Right ventricle myocardium inferior (tissue), 1 donor: ENCODE measurements at regions of chr5 and their contacts with region 1.

Region 1: GRCh38 chr5:14405267-14405666 is 176.3 kb upstream of the OTULINL start:
- DNase-seq: no peak
- ATAC-seq: no peak

Region 2: DNA sequence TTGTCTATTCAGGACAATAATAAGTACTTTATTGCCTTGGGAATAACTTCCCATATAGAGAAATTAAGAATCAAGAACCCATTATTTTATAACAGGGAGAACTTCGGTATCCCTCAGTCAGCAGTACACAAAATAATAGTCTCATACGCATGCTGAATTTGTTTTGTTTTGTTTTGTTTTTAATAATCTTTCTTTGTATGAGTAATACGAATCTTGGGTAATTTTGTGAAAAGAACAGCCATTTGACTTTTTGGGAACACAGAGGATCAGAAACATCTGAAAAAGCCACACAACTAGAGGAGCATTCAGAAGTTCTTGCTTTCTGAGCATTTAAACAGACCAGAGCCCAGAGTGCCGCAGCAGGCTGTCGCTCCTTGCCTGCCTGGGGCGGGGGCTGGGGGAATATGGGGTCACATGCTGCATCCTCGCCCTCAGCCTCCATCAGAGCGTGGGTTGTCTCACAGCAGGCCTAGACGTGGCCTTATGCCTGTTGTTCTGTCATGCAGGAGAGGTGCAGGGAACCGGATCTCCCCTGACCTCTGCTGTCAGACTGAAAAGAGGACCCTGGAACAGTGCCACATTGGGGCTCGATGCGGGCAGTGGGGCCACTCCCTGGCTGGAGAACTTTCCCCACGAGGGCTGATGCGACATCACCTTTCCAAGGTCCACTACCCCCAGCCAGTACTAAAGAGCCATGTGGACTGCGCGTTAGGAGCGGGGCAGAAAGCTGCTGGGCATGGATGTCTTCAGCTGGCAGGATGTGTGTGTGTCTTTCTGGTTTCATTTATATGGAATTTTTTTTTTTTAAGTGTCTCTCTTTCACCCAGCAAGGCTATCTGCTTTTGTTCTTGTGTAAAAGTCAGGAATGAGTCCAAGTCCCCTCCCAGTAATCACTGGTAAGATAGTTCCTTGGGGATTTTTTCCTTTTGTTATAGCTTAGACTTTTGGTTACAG is 43.0 kb after region 1 on chr5:
- intact Hi-C with region 1: loop called (anchors 5 kb)
- DNase-seq: no peak
- ATAC-seq: peak; percentile 10

Region 3: GRCh38 chr5:14483525-14484157 is 78.4 kb after region 1 on chr5:
- intact Hi-C with region 1: no loop called
- DNase-seq: no peak
- ATAC-seq: peak; percentile 32